H1 (cell line): ENCODE measurements at regions of chr11 and their contacts with region 1.

Region 1: DNA sequence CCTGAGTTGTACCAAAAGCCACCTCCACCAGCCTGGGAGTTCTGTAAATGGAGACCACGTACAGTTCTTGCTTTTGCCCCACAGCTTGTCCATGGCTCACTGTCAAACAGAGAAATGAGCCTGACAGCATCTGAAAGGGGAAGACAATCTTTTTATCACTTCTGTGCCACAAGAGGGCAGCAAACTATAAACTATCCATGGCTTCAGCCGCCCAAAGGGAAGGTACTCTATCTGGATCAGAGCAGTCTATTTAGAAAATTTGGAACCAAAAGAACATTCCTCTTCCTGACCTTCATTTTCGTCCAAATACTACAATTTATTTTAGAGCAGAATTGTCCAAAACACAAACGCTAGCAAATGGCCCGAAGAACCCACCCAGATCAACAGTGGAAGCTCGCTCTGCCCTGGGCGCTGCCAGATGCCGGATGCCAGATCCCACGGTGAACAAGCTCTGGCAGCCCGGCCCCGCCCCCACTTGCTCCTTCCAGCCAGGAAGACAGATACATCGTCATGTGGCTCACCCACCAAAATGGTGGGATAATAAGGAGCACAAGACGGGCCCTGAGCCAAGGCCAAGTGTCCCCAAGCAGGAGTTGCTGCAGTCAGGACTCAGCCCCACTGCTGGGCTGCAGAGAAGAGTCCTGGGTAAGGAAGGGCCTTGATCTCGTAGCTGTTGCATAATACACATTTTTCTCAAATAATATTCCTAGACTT is 23.9 kb upstream of the SCGB1A1 start:
- DNase-seq: peak in 1 of 2 experiments; percentile 82
- H3K4me3 ChIP-seq: peak overlapping the region; percentile 9 to 54 (median 22); a peak in 5 of 8 replicates
- H3K27ac ChIP-seq: no peak overlapping the region
- H3K4me1 ChIP-seq: peaks cover 3 to 13% (median 4%) of the 10 kb centered on the region in 4 experiments; a peak in 5 of 7 replicates
- H3K27me3 ChIP-seq: no peaks in the 10 kb centered on the region
- CTCF ChIP-seq: peak in 2 of 3 experiments; percentile 64 to 71; a peak in 3 of 4 replicates
- EP300 ChIP-seq: no peak
- POLR2A ChIP-seq: no peak
- RAD21 ChIP-seq: peak; percentile 86 to 88

Region 2: GRCh38 chr11:61627567-61628445 is 767.2 kb before region 1 on chr11:
- CTCF ChIA-PET with region 1: no interaction called
- POLR2A ChIA-PET with region 1: no interaction called
- DNase-seq: peak in 1 of 2 experiments; percentile 92
- H3K4me3 ChIP-seq: no peak overlapping the region
- H3K27ac ChIP-seq: peak overlapping the region; percentile 76; the same call in 1 of the 2 replicates
- H3K4me1 ChIP-seq: peaks cover 6 to 25% (median 18%) of the 10 kb centered on the region in 4 experiments
- H3K27me3 ChIP-seq: no peaks in the 10 kb centered on the region
- CTCF ChIP-seq: peak; percentile 89 to 99 (median 97)
- EP300 ChIP-seq: no peak
- POLR2A ChIP-seq: no peak
- RAD21 ChIP-seq: peak; percentile 94 to 97

Region 3: GRCh38 chr11:62004473-62004872 is 390.5 kb before region 1 on chr11:
- CTCF ChIA-PET with region 1: no interaction called
- POLR2A ChIA-PET with region 1: no interaction called
- DNase-seq: no peak
- H3K4me3 ChIP-seq: no peak overlapping the region
- H3K27ac ChIP-seq: no peak overlapping the region
- H3K4me1 ChIP-seq: peaks cover 3 to 14% (median 5%) of the 10 kb centered on the region in 4 experiments
- H3K27me3 ChIP-seq: no peaks in the 10 kb centered on the region
- CTCF ChIP-seq: no peak
- EP300 ChIP-seq: no peak
- POLR2A ChIP-seq: no peak
- RAD21 ChIP-seq: no peak

Region 4: GRCh38 chr11:62383822-62384221 is 11.2 kb before region 1 on chr11:
- CTCF ChIA-PET with region 1: interaction called, 13 read pairs
- POLR2A ChIA-PET with region 1: no interaction called
- DNase-seq: no peak
- H3K4me3 ChIP-seq: no peak overlapping the region
- H3K27ac ChIP-seq: no peak overlapping the region
- H3K4me1 ChIP-seq: no peaks in the 10 kb centered on the region
- H3K27me3 ChIP-seq: no peaks in the 10 kb centered on the region
- CTCF ChIP-seq: no peak
- EP300 ChIP-seq: no peak
- POLR2A ChIP-seq: no peak
- RAD21 ChIP-seq: no peak

Region 5: GRCh38 chr11:62411524-62411923 is 16.5 kb after region 1 on chr11:
- CTCF ChIA-PET with region 1: interaction called, 56 read pairs
- POLR2A ChIA-PET with region 1: no interaction called
- DNase-seq: no peak
- H3K4me3 ChIP-seq: no peak overlapping the region
- H3K27ac ChIP-seq: no peak overlapping the region
- H3K4me1 ChIP-seq: 0 out of 7 replicates have a peak, but pooled peaks cover 0 to 2% (median 0%) of the 10 kb centered on the region in 4 experiments
- H3K27me3 ChIP-seq: no peaks in the 10 kb centered on the region
- CTCF ChIP-seq: no peak
- EP300 ChIP-seq: no peak
- POLR2A ChIP-seq: no peak
- RAD21 ChIP-seq: no peak

Region 6: GRCh38 chr11:62419314-62419929 is 24.4 kb after region 1 on chr11:
- CTCF ChIA-PET with region 1: interaction called, 82 read pairs
- POLR2A ChIA-PET with region 1: no interaction called
- DNase-seq: no peak
- H3K4me3 ChIP-seq: no peak overlapping the region
- H3K27ac ChIP-seq: no peak overlapping the region
- H3K4me1 ChIP-seq: no peaks in the 10 kb centered on the region
- H3K27me3 ChIP-seq: peaks cover 0 to 12% (median 9%) of the 10 kb centered on the region in 4 experiments; a peak in 6 of 7 replicates
- CTCF ChIP-seq: no peak
- EP300 ChIP-seq: no peak
- POLR2A ChIP-seq: no peak
- RAD21 ChIP-seq: no peak

Region 7: GRCh38 chr11:62450543-62451240 is 55.7 kb after region 1 on chr11:
- CTCF ChIA-PET with region 1: interaction called, 16 read pairs
- POLR2A ChIA-PET with region 1: no interaction called
- DNase-seq: no peak
- H3K4me3 ChIP-seq: no peak overlapping the region
- H3K27ac ChIP-seq: no peak overlapping the region
- H3K4me1 ChIP-seq: no peaks in the 10 kb centered on the region; a peak in 1 of 7 replicates
- H3K27me3 ChIP-seq: no peaks in the 10 kb centered on the region
- CTCF ChIP-seq: no peak
- EP300 ChIP-seq: no peak
- POLR2A ChIP-seq: no peak
- RAD21 ChIP-seq: no peak